HepG2 (cell line): ENCODE measurements at regions of chr10 and their contacts with region 1.

Region 1: GRCh38 chr10:22340362-22341189 is 4.7 kb upstream of the SPAG6 start:
- DNase-seq: peak; percentile 41
- ATAC-seq: peak; percentile 84
- H3K4me3 ChIP-seq: peak overlapping the region; percentile 69 to 83 (median 71)
- H3K27ac ChIP-seq: peak overlapping the region; percentile 75
- H3K4me1 ChIP-seq: peaks cover 12% of the 10 kb centered on the region
- H3K27me3 ChIP-seq: peaks cover 0 to 46% of the 10 kb centered on the region in 2 experiments; a peak in 3 of 5 replicates
- CTCF ChIP-seq: no peak
- EP300 ChIP-seq: no peak
- POLR2A ChIP-seq: peak in 1 of 2 experiments; percentile 45; a peak in 3 of 4 replicates
- RAD21 ChIP-seq: peak; percentile 57; the same call in 1 of the 2 replicates

Region 2: DNA sequence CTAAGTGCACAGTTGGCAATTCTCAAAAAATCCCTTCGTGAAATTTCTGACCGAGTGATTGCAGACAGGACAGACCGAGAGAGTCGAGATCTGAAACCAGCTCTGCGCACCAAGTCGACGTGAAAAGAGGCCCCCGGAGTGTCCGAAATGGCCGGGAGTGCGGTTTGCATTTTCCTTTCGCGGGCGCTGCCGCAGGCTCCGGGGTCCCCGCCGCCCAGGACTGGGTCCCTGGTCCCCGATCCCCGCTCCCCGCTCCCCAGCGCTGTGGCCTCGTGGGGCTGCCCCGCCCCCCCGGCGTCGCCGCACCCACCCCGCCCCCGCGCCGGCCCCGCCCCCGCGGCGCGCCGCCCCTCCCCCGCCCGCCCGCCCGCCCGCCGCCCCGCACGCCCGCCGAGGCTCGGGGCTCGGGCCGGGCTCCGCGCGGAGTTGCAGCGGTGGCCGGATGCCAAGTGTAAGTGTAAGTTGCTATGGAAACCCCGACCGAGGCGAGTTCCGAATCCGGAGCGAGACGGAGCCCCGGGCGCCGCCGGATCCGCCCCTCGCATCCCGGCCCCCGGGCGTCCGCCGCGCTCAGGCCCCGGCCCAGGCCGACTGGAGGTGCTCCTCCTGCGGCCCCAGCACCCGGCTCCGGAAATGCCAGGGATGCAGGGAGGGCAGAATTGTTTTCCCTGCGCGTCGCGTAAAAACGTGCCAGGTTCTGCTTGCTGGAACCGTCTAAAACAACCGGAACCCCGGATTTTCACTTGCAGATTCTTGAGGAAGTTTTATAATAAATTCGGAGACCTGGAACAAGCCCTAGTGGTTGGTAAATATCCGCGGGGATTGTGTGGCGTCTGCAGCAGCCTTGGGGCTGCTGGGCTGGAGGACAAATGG is 15.1 kb before region 1 on chr10:
- CTCF ChIA-PET with region 1: no interaction called
- POLR2A ChIA-PET with region 1: interaction called, 9 read pairs
- in situ Hi-C with region 1: no loop called
- intact Hi-C with region 1: loop called (anchors 2 kb)
- DNase-seq: peak; percentile 61
- ATAC-seq: peak; percentile 85
- H3K4me3 ChIP-seq: peak overlapping the region; percentile 60 to 91 (median 79)
- H3K27ac ChIP-seq: peak overlapping the region; percentile 56
- H3K4me1 ChIP-seq: peaks cover 38% of the 10 kb centered on the region
- H3K27me3 ChIP-seq: peaks cover 0 to 7% of the 10 kb centered on the region in 2 experiments; a peak in 2 of 5 replicates
- CTCF ChIP-seq: no peak
- EP300 ChIP-seq: no peak
- POLR2A ChIP-seq: no peak
- RAD21 ChIP-seq: peak; percentile 37; the same call in 1 of the 2 replicates

Region 3: GRCh38 chr10:22436884-22437619 is 96.5 kb after region 1 on chr10:
- CTCF ChIA-PET with region 1: no interaction called
- POLR2A ChIA-PET with region 1: no interaction called
- in situ Hi-C with region 1: no loop called
- intact Hi-C with region 1: loop called (anchors 5 kb)
- DNase-seq: peak; percentile 10
- ATAC-seq: peak; percentile 87
- H3K4me3 ChIP-seq: peak overlapping the region; percentile 57 to 74 (median 67)
- H3K27ac ChIP-seq: no peak overlapping the region
- H3K4me1 ChIP-seq: peaks cover 15% of the 10 kb centered on the region
- H3K27me3 ChIP-seq: peaks cover 0 to 16% of the 10 kb centered on the region in 2 experiments; a peak in 4 of 5 replicates
- CTCF ChIP-seq: no peak
- EP300 ChIP-seq: no peak
- POLR2A ChIP-seq: no peak
- RAD21 ChIP-seq: no peak

Region 4: GRCh38 chr10:22537810-22538209 is 197.2 kb after region 1 on chr10:
- CTCF ChIA-PET with region 1: no interaction called
- POLR2A ChIA-PET with region 1: no interaction called
- in situ Hi-C with region 1: no loop called
- intact Hi-C with region 1: no loop called
- DNase-seq: no peak
- ATAC-seq: no peak
- H3K4me3 ChIP-seq: no peak overlapping the region
- H3K27ac ChIP-seq: no peak overlapping the region
- H3K4me1 ChIP-seq: peaks cover 21% of the 10 kb centered on the region
- H3K27me3 ChIP-seq: no peaks in the 10 kb centered on the region
- CTCF ChIP-seq: no peak
- EP300 ChIP-seq: no peak
- POLR2A ChIP-seq: no peak
- RAD21 ChIP-seq: no peak

Region 5: DNA sequence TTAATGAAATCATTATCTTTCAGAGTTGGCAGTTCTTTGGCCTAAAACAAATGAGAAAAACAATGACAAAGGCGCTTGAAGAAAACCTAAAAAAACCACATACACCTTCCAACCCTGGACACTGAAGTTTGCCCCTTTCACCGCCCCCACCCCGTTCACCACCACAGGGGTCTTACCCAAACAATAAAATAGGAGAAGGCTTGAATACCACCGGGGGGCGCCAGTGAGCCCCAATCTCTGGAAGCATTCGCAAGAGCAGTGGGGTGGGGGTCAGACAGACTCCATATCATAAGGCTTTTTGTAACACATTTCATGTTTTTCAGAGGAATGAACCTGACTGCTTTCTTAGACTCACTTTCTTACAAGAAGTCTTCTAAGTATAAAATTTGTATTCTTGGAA is 210.2 kb after region 1 on chr10:
- CTCF ChIA-PET with region 1: no interaction called
- POLR2A ChIA-PET with region 1: no interaction called
- in situ Hi-C with region 1: no loop called
- intact Hi-C with region 1: loop called (anchors 1 kb)
- DNase-seq: peak; percentile 40
- ATAC-seq: peak; percentile 42; the same call in 1 of the 3 replicates
- H3K4me3 ChIP-seq: no peak overlapping the region
- H3K27ac ChIP-seq: no peak overlapping the region
- H3K4me1 ChIP-seq: no peaks in the 10 kb centered on the region
- H3K27me3 ChIP-seq: no peaks in the 10 kb centered on the region
- CTCF ChIP-seq: peak; percentile 52
- EP300 ChIP-seq: no peak
- POLR2A ChIP-seq: no peak
- RAD21 ChIP-seq: no peak